Lower lobe of right lung (tissue), 2 donors: ENCODE measurements at regions of chr3 and their contacts with region 1.

Region 1: DNA sequence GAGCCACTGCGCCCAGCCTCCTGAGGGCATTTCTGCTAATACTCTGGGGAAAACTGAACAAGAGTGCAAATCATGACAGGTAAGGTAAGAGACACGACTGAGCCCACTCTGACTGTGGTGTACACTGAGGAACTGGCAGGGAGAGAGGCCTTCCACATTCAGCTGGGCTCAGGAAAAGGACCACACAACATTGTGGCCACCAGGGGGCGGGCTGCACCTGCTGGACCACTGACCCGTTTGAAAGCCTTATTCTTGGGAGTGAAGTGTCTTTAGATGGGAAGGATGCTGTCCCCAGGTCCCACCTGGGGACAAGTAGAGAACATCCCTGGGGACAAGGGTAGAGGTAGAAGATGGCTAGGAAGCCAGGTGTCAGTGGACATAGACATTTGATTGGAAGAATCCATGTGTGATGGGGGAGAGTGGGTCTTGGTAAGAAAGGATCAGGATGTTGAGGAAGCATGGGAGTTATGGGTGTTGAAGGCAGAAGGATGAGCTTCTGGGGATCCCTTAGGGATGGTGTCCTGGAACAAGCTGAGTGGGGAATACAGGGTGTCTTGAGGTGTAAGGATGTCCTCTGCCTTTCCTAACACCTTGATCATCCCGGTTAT is 6.2 kb upstream of the CTDSPL start:
- DNase-seq: peak; percentile 89
- ATAC-seq: peak; percentile 70 to 74
- H3K4me3 ChIP-seq: no peak overlapping the region
- H3K27ac ChIP-seq: no peak overlapping the region
- H3K4me1 ChIP-seq: peaks cover 8% of the 10 kb centered on the region
- H3K27me3 ChIP-seq: no peaks in the 10 kb centered on the region
- CTCF ChIP-seq: peak; percentile 93

Region 2: DNA sequence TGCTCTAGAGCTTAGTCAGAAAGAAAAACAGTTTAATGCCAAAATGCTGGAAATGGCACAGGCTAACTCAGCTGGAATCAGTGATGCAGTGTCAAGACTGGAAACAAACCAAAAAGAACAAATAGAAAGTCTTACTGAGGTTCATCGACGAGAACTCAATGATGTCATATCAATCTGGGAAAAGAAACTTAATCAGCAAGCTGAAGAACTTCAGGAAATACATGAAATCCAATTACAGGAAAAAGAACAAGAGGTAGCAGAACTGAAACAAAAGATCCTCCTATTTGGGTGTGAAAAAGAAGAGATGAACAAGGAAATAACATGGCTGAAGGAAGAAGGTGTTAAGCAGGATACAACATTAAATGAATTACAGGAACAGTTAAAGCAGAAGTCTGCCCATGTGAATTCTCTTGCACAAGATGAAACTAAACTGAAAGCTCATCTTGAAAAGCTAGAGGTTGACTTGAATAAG is 530.6 kb before region 1 on chr3:
- intact Hi-C with region 1: no loop called
- DNase-seq: no peak
- ATAC-seq: no peak
- H3K4me3 ChIP-seq: no peak overlapping the region
- H3K27ac ChIP-seq: peak overlapping the region; percentile 21
- H3K4me1 ChIP-seq: peaks cover 21% of the 10 kb centered on the region
- H3K27me3 ChIP-seq: no peaks in the 10 kb centered on the region
- CTCF ChIP-seq: no peak

Region 3: DNA sequence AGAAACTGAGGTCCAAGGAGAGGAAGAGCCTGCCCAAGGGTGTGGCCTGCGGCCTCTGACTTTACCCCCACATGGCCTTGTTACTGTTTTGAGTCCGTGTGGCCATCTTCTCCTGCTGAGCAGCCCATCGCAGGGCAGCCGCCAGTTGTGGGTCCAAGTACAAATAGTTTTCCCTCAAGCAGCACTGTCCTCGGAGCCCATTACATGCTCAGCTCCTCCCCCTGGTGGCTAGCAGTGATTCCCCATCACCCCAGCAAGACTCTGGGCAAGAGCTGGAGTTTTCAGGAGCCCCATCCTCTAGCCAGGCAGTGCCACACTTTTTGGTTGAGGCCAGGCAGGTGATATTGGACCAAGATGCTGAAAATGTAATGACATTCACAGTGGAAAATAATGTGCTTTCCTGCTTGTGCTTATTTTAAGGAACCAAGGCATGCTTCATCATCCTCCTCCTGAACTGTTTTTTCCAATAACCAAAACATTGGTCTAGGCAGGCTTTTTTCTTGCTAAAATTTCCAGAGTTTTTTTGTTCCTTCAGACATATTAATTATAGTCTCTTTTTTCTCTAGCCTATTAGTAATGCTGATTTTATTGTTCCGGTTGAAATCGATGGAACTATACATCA is 111.9 kb after region 1 on chr3:
- intact Hi-C with region 1: loop called (anchors 5 kb)
- DNase-seq: peak; percentile 74
- ATAC-seq: peak; percentile 81 to 87
- H3K4me3 ChIP-seq: no peak overlapping the region
- H3K27ac ChIP-seq: no peak overlapping the region
- H3K4me1 ChIP-seq: peaks cover 28% of the 10 kb centered on the region
- H3K27me3 ChIP-seq: no peaks in the 10 kb centered on the region
- CTCF ChIP-seq: peak; percentile 84